Heart right ventricle (tissue), 16 donors: ENCODE measurements at regions of chr5 and their contacts with region 1.

Region 1: GRCh38 chr5:95803284-95804148 is 19.0 kb downstream of the GLRX start:
- DNase-seq: no peak
- ATAC-seq: peak; percentile 54 to 93 (median 81)
- H3K4me3 ChIP-seq: no peak overlapping the region
- H3K27ac ChIP-seq: peak overlapping the region; percentile 43 to 87 (median 72)
- H3K4me1 ChIP-seq: peaks cover 4 to 50% (median 29%) of the 10 kb centered on the region in 9 donors
- H3K27me3 ChIP-seq: no peaks in the 10 kb centered on the region
- CTCF ChIP-seq: no peak

Region 2: GRCh38 chr5:95730730-95731570 is 72.6 kb before region 1 on chr5 and contains the start of gene RHOBTB3:
- intact Hi-C with region 1: no loop called
- DNase-seq: peak; percentile 90 to 91
- ATAC-seq: peak; percentile 74 to 88 (median 78)
- H3K4me3 ChIP-seq: peak within 1 kb of the TSS; percentile 56 to 84 (median 78)
- H3K27ac ChIP-seq: peak within 1 kb of the TSS; percentile 79 to 98 (median 93)
- H3K4me1 ChIP-seq: peaks cover 0 to 75% (median 48%) of the 10 kb centered on the region in 9 donors
- H3K27me3 ChIP-seq: peaks cover 0 to 9% (median 0%) of the 10 kb centered on the region in 7 donors
- CTCF ChIP-seq: peak in 1 of 9 donors; percentile 25
- total RNA-seq, gene RHOBTB3: 73.1 to 124 (median 94.4) TPM

Region 3: GRCh38 chr5:95835682-95836385 is 32.3 kb after region 1 on chr5:
- intact Hi-C with region 1: loop called in 2 of 10 experiments (anchors 5 kb)
- DNase-seq: no peak
- ATAC-seq: peak in 5 of 8 donors; percentile 12 to 31 (median 22)
- H3K4me3 ChIP-seq: peak overlapping the region in 8 of 10 donors; percentile 47 to 69 (median 61)
- H3K27ac ChIP-seq: peak overlapping the region in 8 of 10 donors; percentile 80 to 97 (median 88)
- H3K4me1 ChIP-seq: peaks cover 4 to 52% (median 21%) of the 10 kb centered on the region in 9 donors
- H3K27me3 ChIP-seq: no peaks in the 10 kb centered on the region
- CTCF ChIP-seq: no peak